GM10248 (cell line): ENCODE measurements at regions of chr3 and their contacts with region 1.

Region 1: DNA sequence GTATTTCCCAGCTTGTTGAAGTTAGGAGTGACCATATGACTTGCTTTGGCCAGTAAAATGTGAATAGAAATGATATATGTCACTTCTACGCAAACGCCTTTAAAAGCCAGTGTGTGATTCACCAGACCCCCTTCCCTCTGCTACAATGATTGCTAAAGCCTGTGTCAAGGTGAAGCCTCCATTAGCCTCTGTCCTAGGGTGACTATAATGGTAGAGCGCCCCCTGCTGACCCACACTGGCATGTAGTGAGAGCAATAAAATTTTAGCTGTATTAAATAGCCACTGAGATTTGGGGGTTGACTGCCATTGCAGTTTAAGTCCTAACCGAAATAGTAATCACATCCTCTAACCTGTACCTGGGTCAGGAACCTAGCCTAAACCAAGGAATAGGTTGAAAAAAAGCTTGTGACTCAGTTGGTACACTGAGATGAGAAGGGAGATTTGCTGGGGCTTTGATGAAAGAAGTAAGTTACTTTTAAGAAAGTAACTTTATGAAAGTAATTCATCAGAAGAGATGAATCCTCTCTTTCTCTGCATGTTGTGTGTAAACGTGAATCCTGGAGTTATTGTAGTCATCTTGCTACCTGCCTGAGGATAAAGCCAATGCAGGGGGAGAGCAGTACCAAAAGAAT is 52.6 kb downstream of the GTF2E1 start:
- DNase-seq: peak; percentile 47
- CTCF ChIP-seq: peak; percentile 90

Region 2: GRCh38 chr3:120558771-120559241 is 236.3 kb before region 1 on chr3:
- CTCF ChIA-PET with region 1: interaction called, 165 read pairs
- POLR2A ChIA-PET with region 1: no interaction called
- DNase-seq: peak; percentile 82
- CTCF ChIP-seq: peak; percentile 99

Region 3: GRCh38 chr3:120742198-120742849 is 52.8 kb before region 1 on chr3 and contains the starts of genes GTF2E1 and RABL3:
- CTCF ChIA-PET with region 1: interaction called, 28 read pairs
- POLR2A ChIA-PET with region 1: no interaction called
- DNase-seq: peak; percentile 97
- CTCF ChIP-seq: no peak

Region 4: DNA sequence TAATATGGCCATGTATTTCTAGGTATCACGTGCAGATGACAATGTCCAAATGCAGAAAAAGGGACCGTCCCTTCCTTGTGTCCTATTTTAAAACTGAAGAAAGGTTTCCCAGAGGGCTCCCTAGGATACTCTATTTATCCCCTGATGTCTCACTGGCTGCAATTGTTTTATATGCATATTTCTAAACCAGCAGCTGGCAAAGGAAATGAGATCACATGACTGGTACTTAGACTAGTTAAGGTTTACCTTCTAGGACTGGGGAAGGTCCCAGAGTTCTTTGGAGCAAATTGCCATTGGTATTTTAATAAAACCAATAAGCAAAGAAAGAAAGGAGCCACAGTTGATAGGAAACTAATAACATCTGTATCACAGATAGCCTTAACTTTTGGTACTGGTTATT is 23.1 kb before region 1 on chr3:
- CTCF ChIA-PET with region 1: interaction called, 52 read pairs
- POLR2A ChIA-PET with region 1: no interaction called
- DNase-seq: no peak
- CTCF ChIP-seq: no peak

Region 5: GRCh38 chr3:120820748-120821147 is 25.6 kb after region 1 on chr3:
- CTCF ChIA-PET with region 1: interaction called, 12 read pairs
- POLR2A ChIA-PET with region 1: no interaction called
- DNase-seq: no peak
- CTCF ChIP-seq: no peak